CD4-positive, alpha-beta T cell (primary cell): ENCODE measurements at regions of chr13 and their contacts with region 1.

Region 1: DNA sequence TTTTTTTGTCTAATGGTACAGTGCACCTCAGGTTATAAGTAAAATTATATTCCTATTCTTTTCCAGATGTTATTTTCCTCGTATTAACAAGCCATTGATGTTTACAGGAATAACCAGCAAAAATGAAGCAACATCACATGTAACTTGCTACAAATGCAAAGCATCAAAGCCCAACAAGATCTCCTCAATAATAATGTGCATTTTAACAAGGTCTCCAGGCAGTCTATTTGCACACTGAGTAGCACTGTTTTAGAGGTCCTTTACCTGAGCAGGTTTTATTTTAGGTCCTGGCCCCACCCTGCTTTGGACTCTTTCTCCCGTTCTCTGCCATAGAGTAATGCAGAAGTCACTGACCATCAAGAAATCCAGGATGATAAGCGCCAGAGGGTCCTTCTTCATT is 298.4 kb downstream of the FGF14 start:
- DNase-seq: no peak
- ATAC-seq: no peak
- H3K4me3 ChIP-seq: no peak overlapping the region
- H3K4me3 Mint-ChIP-seq: no peak overlapping the region
- H3K27ac ChIP-seq: no peak overlapping the region
- H3K27ac Mint-ChIP-seq: no peak overlapping the region
- H3K4me1 ChIP-seq: no peaks in the 10 kb centered on the region
- H3K4me1 Mint-ChIP-seq: no peaks in the 10 kb centered on the region
- H3K27me3 ChIP-seq: no peaks in the 10 kb centered on the region
- H3K27me3 Mint-ChIP-seq: no peaks in the 10 kb centered on the region
- CTCF ChIP-seq: no peak

Region 2: GRCh38 chr13:101866889-101867581 is 236.4 kb before region 1 on chr13:
- CTCF ChIA-PET with region 1: no interaction called
- POLR2A ChIA-PET with region 1: no interaction called
- intact Hi-C with region 1: no loop called
- DNase-seq: no peak
- ATAC-seq: no peak
- H3K4me3 ChIP-seq: no peak overlapping the region
- H3K4me3 Mint-ChIP-seq: no peak overlapping the region
- H3K27ac ChIP-seq: no peak overlapping the region
- H3K27ac Mint-ChIP-seq: no peak overlapping the region
- H3K4me1 ChIP-seq: no peaks in the 10 kb centered on the region
- H3K4me1 Mint-ChIP-seq: no peaks in the 10 kb centered on the region
- H3K27me3 ChIP-seq: no peaks in the 10 kb centered on the region
- H3K27me3 Mint-ChIP-seq: peaks cover 5% of the 10 kb centered on the region
- CTCF ChIP-seq: no peak

Region 3: DNA sequence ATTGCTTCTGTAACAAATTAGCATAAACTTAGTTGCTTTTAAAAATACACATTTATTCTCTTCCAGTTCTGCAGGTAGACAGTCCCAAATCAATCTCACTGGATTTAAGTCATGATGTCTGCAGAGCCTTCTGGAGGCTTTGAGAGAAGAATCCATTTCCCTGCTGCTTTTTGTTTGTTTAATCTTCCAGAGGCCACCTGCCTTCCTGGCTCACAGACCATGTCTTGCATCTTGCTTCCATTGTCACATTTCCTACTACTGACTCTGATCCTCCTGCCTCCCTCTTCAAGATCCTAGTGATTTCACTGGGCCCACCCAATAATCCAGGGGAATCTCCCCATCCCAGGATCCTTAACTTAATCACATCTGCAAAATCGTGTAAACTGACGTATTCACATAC is 177.7 kb before region 1 on chr13:
- CTCF ChIA-PET with region 1: no interaction called
- POLR2A ChIA-PET with region 1: no interaction called
- intact Hi-C with region 1: no loop called
- DNase-seq: no peak
- ATAC-seq: no peak
- H3K4me3 ChIP-seq: no peak overlapping the region
- H3K4me3 Mint-ChIP-seq: no peak overlapping the region
- H3K27ac ChIP-seq: no peak overlapping the region
- H3K27ac Mint-ChIP-seq: no peak overlapping the region
- H3K4me1 ChIP-seq: no peaks in the 10 kb centered on the region
- H3K4me1 Mint-ChIP-seq: no peaks in the 10 kb centered on the region
- H3K27me3 ChIP-seq: peaks cover 2 to 13% of the 10 kb centered on the region in 2 experiments
- H3K27me3 Mint-ChIP-seq: peaks cover 37% of the 10 kb centered on the region
- CTCF ChIP-seq: no peak

Region 4: DNA sequence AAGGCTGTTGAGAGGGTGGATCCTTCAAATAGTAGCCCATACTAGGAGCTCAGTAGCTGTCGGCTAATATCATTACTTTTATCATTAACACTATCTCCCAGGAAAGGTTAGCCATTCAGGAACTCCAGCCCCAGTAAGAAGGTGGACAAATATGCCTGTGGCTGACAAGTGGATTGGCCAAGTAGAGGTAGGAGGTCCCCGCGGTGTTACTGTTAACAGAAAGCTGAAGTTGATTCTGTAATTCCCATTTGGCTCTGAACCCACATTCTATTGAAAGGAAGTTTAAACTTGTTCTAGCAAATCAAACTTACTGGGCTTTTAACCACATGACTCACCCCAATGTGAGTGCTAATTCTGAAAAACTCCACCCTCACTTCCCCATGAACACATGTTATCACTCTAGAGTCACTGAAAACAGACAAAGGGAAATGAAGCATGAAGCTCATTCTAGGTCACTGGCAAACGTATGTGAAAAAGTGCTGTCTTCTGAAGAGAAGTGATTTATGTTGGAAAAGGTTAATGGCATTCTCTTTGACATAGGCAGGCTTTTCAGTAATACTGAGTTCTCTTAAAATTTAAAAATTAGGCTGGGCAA is 24.8 kb after region 1 on chr13:
- CTCF ChIA-PET with region 1: no interaction called
- POLR2A ChIA-PET with region 1: no interaction called
- intact Hi-C with region 1: loop called in 1 of 2 experiments (anchors 1 kb)
- DNase-seq: no peak
- ATAC-seq: no peak
- H3K4me3 ChIP-seq: no peak overlapping the region
- H3K4me3 Mint-ChIP-seq: no peak overlapping the region
- H3K27ac ChIP-seq: no peak overlapping the region
- H3K27ac Mint-ChIP-seq: no peak overlapping the region
- H3K4me1 ChIP-seq: no peaks in the 10 kb centered on the region
- H3K4me1 Mint-ChIP-seq: no peaks in the 10 kb centered on the region
- H3K27me3 ChIP-seq: no peaks in the 10 kb centered on the region
- H3K27me3 Mint-ChIP-seq: peaks cover 9% of the 10 kb centered on the region
- CTCF ChIP-seq: no peak